ENCODE measurements at regions of chr10 and their contacts with region 1.

Region 1: DNA sequence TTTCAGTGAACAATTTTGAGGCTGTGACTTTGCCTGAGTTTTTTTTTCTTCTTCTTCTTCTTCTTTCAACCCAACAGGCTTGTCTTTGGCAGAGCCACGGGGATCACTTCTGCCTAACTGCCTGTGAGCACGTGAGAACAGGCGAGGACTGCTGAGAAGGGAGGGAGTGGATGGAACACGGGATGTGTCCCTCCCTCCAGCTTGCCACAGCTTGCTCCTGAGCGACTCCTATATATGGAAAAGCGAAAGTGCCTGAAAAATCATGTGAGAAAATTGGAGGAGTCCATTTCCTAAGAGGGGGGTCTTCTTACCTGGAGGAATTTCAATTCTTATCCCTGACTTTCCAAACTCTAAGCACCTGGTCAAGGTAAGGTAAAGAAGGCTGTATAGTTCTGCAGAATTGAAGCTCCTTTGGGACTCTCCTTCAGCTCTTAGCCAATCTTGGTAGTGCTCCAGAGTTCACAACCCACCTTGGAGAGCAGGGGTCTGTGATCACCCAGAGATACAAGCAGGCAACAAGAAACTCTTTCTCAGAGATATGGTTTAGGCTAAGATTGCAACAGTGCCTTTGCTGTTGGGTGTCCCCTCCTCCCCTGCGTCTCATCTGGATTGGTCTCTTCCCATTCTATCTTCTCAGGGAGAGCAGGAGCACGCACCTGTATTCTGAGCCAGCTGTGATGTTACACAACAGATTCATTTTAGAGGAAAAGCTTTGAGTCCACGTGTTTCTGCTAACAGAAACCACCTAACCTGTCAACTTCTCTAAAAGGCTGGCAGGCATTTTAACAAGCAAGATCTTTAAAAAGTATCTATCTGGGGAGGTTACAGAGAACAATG is at the start of gene MAT1A:
- DNase-seq: peak; percentile 84
- ATAC-seq: peak; percentile 76
- H3K4me3 ChIP-seq: peak within 1 kb of the TSS; percentile 44 to 67 (median 62)
- H3K27ac ChIP-seq: peak within 1 kb of the TSS; percentile 94
- H3K4me1 ChIP-seq: peaks cover 93% of the 10 kb centered on the region
- H3K27me3 ChIP-seq: no peaks in the 10 kb centered on the region; a peak in 1 of 5 replicates
- CTCF ChIP-seq: peak; percentile 66
- EP300 ChIP-seq: peak in 1 of 2 experiments; percentile 50; a peak in 2 of 4 replicates
- POLR2A ChIP-seq: peak; percentile 35 to 76; a peak in 3 of 4 replicates
- RAD21 ChIP-seq: 0 out of 2 replicates have a peak, but pooled peaks have one; percentile 8
- total RNA-seq, gene MAT1A: 76.9 and 101 TPM in 2 replicates

Region 2: GRCh38 chr10:80205478-80206276 is 84.0 kb before region 1 on chr10 and contains the start of gene ANXA11:
- CTCF ChIA-PET with region 1: no interaction called
- POLR2A ChIA-PET with region 1: no interaction called
- in situ Hi-C with region 1: no loop called
- intact Hi-C with region 1: no loop called
- DNase-seq: peak; percentile 72
- ATAC-seq: peak; percentile 81
- H3K4me3 ChIP-seq: peak within 1 kb of the TSS; percentile 87 to 93 (median 88)
- H3K27ac ChIP-seq: peak within 1 kb of the TSS; percentile 74
- H3K4me1 ChIP-seq: peaks cover 46% of the 10 kb centered on the region
- H3K27me3 ChIP-seq: no peaks in the 10 kb centered on the region; a peak in 1 of 5 replicates
- CTCF ChIP-seq: peak; percentile 21; the same call in 1 of the 2 replicates
- EP300 ChIP-seq: no peak
- POLR2A ChIP-seq: peak; percentile 91 to 92
- RAD21 ChIP-seq: peak; percentile 34; the same call in 1 of the 2 replicates
- total RNA-seq, gene ANXA11: 51.5 and 63.3 TPM in 2 replicates

Region 3: DNA sequence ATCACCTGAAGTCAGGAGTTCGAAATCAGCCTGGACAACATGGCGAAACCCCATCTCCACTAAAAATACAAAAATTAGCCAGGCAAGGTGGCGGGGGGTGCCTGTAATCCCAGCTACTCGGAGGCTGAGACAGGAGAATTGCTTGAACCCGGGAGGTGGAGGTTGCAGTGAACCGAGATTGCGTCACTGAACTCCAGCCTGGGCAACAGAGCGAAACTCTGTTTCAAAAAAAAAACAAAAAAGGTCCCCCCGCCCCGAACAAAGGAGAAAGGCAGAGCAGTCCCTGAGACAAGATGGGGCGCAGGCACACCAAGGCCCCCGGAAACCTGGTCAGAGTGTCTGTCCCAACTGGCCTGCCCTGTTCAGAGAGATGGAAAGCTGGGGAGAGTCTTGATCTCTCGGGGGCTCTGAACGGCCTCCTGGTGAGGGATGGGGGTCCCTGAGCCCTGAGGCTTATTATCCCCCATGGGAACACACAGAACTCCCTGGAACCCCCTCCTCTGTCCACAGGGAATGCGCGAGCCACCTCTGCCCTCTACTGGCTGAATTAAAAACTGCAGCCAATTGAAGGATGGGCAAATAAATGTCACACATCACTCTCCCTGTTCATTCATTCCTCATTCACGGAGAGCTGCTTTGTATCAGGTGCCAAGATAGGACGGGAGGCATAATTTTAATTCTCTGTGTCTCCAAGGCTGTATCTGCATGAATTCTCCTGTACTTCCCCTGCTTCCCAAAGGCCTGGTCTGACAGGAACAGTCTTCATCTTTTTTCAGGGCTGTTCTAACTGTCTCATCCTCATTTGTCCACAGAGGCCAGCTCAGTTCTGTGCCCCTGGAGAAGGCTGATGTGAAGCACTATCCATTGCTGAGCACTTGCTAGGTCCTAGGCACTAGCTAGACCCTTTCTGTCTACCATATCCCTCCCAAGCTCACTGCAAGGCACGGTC is 29.1 kb before region 1 on chr10:
- CTCF ChIA-PET with region 1: interaction called, 11 read pairs
- POLR2A ChIA-PET with region 1: interaction called, 20 read pairs
- in situ Hi-C with region 1: no loop called
- intact Hi-C with region 1: loop called (anchors 1 kb)
- DNase-seq: peak; percentile 48
- ATAC-seq: peak; percentile 37
- H3K4me3 ChIP-seq: no peak overlapping the region
- H3K27ac ChIP-seq: no peak overlapping the region
- H3K4me1 ChIP-seq: peaks cover 69% of the 10 kb centered on the region
- H3K27me3 ChIP-seq: no peaks in the 10 kb centered on the region
- CTCF ChIP-seq: peak; percentile 78
- EP300 ChIP-seq: no peak
- POLR2A ChIP-seq: no peak
- RAD21 ChIP-seq: peak; percentile 18; the same call in 1 of the 2 replicates

Region 4: GRCh38 chr10:80265740-80266512 is 23.7 kb before region 1 on chr10:
- CTCF ChIA-PET with region 1: interaction called, 11 read pairs
- POLR2A ChIA-PET with region 1: interaction called, 69 read pairs
- in situ Hi-C with region 1: no loop called
- intact Hi-C with region 1: loop called (anchors 1 kb)
- DNase-seq: no peak
- ATAC-seq: peak; percentile 55
- H3K4me3 ChIP-seq: no peak overlapping the region
- H3K27ac ChIP-seq: peak overlapping the region; percentile 90
- H3K4me1 ChIP-seq: peaks cover 87% of the 10 kb centered on the region
- H3K27me3 ChIP-seq: no peaks in the 10 kb centered on the region
- CTCF ChIP-seq: no peak
- EP300 ChIP-seq: no peak
- POLR2A ChIP-seq: no peak
- RAD21 ChIP-seq: no peak

Region 5: DNA sequence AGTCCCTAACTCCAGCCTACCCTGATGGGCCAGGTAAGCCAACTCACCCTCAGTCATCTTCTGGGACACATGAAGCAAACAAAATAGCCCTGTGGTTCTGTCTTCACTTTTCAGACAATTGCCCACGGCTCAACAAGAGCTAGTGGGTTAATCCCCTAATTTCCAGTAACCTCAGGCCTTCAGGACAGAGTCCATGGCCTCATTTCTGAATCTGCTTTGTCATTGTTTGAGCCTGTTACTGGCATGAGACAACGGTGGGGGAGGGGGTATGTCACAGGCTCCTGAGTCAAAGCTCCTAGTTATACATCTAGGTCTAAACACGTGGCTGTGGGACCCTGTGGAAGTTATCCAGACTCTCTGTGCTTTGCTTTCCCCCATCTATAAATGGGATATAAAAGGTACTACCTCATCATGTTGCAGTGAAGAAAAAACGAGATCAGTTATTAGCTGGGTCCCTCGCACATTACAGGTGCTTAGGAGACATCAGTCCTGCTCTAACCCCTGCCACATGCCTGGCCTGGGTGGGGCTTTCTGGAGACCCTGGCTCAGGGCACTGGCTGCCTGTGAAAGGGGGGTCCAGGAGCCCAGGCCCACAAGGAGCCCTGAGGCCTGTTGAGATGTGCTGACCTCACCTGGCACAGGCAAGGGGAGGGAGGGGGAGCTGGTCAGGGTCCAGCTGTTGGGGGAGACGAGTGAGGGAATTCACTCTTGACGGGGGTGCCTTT is 16.7 kb before region 1 on chr10:
- CTCF ChIA-PET with region 1: no interaction called
- POLR2A ChIA-PET with region 1: interaction called, 69 read pairs
- in situ Hi-C with region 1: no loop called
- intact Hi-C with region 1: no loop called
- DNase-seq: peak; percentile 92
- ATAC-seq: peak; percentile 82
- H3K4me3 ChIP-seq: 0 out of 6 replicates have a peak overlapping the region, but pooled peaks of 1 of the 3 experiments have one; percentile 17
- H3K27ac ChIP-seq: peak overlapping the region; percentile 95
- H3K4me1 ChIP-seq: peaks cover 64% of the 10 kb centered on the region
- H3K27me3 ChIP-seq: no peaks in the 10 kb centered on the region
- CTCF ChIP-seq: no peak
- EP300 ChIP-seq: peak; percentile 83 to 94; a peak in 3 of 4 replicates
- POLR2A ChIP-seq: no peak; a peak in 1 of 4 replicates
- RAD21 ChIP-seq: peak; percentile 41; the same call in 1 of the 2 replicates

Region 6: DNA sequence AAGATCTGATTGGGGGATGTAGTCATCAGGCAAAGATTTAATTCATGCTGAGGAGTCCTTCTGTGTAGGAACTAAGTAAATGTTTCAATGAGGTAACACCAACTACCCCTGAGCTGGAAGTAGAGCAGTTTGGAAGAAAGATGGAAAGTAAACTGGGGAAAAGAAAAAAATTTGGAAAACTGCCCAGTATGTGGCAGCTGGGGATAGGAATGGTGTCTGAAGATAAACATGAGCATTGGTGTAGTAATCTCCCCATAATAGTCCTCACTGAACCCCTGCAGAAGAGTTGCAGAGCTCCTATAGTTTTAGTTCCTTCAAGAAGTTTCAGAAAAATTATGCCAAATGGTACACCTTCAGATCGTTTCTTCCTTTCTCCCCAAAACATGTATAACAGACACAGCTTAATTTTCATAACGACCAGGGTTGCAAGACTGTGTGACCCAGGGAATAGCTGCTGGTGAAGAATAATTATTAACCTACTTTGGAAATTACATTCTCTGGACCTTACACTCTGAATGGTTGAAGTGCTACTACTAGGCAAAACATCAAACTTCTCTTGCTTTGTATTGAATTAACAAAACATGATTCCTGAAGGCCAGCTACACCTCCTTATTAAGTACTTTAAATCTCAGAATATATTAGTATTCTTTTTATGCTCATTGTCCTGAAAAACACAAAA is 1138.9 kb after region 1 on chr10:
- CTCF ChIA-PET with region 1: no interaction called
- POLR2A ChIA-PET with region 1: no interaction called
- in situ Hi-C with region 1: no loop called
- intact Hi-C with region 1: no loop called
- DNase-seq: no peak
- ATAC-seq: no peak
- H3K4me3 ChIP-seq: no peak overlapping the region
- H3K27ac ChIP-seq: no peak overlapping the region
- H3K4me1 ChIP-seq: no peaks in the 10 kb centered on the region
- H3K27me3 ChIP-seq: no peaks in the 10 kb centered on the region
- CTCF ChIP-seq: no peak
- EP300 ChIP-seq: no peak
- POLR2A ChIP-seq: no peak
- RAD21 ChIP-seq: no peak